ENCODE measurements at regions of chr12 and their contacts with region 1.

Region 1: GRCh38 chr12:48165094-48165981 is 8.0 kb upstream of the ASB8 start:
- DNase-seq: peak; percentile 76
- H3K4me3 ChIP-seq: no peak overlapping the region
- H3K27ac ChIP-seq: no peak overlapping the region
- H3K4me1 ChIP-seq: no peaks in the 10 kb centered on the region
- CTCF ChIP-seq: peak; percentile 98

Region 2: GRCh38 chr12:48084066-48084465 is 81.3 kb before region 1 on chr12:
- CTCF ChIA-PET with region 1: no interaction called
- POLR2A ChIA-PET with region 1: no interaction called
- intact Hi-C with region 1: loop called (anchors 2 kb)
- DNase-seq: peak; percentile 36
- H3K4me3 ChIP-seq: no peak overlapping the region
- H3K27ac ChIP-seq: no peak overlapping the region
- H3K4me1 ChIP-seq: no peaks in the 10 kb centered on the region
- CTCF ChIP-seq: peak; percentile 69

Region 3: DNA sequence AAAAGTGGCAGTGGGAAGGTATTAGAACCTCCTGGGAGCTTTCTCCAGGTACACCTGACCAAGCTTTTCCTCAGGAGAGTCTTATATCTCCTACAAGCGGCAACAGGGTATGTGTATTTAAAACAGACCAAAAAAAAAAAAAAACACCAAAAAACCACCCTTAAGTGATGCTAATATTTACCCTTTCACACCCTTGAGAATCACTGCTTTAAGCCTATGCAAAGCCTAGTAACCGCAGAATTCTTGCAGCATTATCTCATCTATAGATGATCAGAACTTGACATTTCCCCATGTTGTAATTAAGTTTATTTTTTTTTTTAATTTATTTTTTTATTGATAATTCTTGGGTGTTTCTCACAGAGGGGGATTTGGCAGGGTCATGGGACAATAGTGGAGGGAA is 166.1 kb after region 1 on chr12:
- CTCF ChIA-PET with region 1: no interaction called
- POLR2A ChIA-PET with region 1: no interaction called
- intact Hi-C with region 1: no loop called
- DNase-seq: no peak
- H3K4me3 ChIP-seq: no peak overlapping the region
- H3K27ac ChIP-seq: no peak overlapping the region
- H3K4me1 ChIP-seq: no peaks in the 10 kb centered on the region
- CTCF ChIP-seq: no peak

Region 4: DNA sequence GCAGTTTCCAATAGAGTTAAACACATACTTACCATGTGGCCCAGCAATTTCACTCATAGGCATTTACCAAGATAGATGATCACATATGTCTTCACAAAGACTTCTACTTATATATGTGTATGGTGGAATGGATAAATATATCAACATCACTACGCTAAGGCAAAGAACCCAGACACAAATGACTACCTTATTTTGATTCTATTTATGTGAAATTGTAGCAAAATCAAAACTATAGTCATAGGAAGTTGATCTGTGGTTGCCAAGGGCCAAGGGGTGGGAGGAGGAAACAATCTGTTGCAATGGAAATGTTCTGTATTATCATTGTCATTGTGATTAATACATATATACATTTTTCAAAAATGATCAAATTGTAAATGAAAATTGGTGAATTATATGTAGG is 259.3 kb after region 1 on chr12:
- CTCF ChIA-PET with region 1: no interaction called
- POLR2A ChIA-PET with region 1: no interaction called
- intact Hi-C with region 1: no loop called
- DNase-seq: no peak
- H3K4me3 ChIP-seq: no peak overlapping the region
- H3K27ac ChIP-seq: no peak overlapping the region
- H3K4me1 ChIP-seq: no peaks in the 10 kb centered on the region
- CTCF ChIP-seq: no peak

Measured in OCI-LY7 (cell line).